Heart right ventricle (tissue), 16 donors: ENCODE measurements at regions of chr9 and their contacts with region 1.

Region 1: DNA sequence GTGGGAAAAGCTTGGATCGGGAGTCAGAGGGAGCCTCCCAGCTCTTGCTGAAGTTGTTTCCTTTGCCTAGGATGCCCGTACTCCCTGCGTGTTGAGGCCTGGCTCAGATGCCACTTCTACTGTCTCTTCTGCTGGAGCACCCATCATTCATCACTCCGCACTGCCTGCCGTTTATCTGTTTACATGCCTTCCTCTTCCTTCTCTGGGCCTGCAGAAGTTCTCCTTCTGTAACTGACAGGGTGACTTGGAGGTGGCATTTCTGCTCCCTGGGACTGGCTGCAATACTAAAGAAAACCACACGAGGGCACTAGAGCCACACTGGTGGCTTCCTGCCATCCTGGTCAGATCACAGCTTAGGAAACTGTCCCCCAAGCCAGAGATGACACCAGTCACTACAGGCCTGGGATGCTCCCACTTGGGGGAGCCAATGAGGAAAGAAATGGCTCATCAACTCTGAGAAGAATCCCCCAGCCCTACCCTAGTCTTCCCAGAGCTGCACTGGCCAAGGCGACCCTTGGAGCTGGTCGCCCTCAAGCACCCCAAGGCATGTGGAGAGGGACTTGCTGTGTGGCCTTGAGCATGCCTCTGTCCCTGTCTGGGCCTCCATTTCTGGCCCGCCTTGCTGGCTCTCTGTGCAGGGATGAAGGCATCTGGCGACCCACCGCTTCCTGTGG is 9.7 kb upstream of the SLC25A51 start:
- DNase-seq: peak; percentile 75 to 81
- ATAC-seq: peak; percentile 70 to 84 (median 82)
- H3K4me3 ChIP-seq: no peak overlapping the region
- H3K27ac ChIP-seq: peak overlapping the region in 1 of 10 donors; percentile 15
- H3K4me1 ChIP-seq: peaks cover 4 to 51% (median 38%) of the 10 kb centered on the region in 9 donors
- H3K27me3 ChIP-seq: no peaks in the 10 kb centered on the region
- CTCF ChIP-seq: peak; percentile 97 to 100 (median 98)

Region 2: GRCh38 chr9:37984672-37985611 is 71.3 kb after region 1 on chr9:
- intact Hi-C with region 1: loop called in 2 of 10 experiments (anchors 5 kb)
- DNase-seq: peak; percentile 43 to 67
- ATAC-seq: peak; percentile 74 to 88 (median 82)
- H3K4me3 ChIP-seq: no peak overlapping the region
- H3K27ac ChIP-seq: peak overlapping the region in 5 of 10 donors; percentile 18 to 77 (median 59)
- H3K4me1 ChIP-seq: peaks cover 18 to 72% (median 54%) of the 10 kb centered on the region in 9 donors
- H3K27me3 ChIP-seq: no peaks in the 10 kb centered on the region
- CTCF ChIP-seq: peak in 4 of 9 donors; percentile 9 to 37 (median 26)

Region 3: GRCh38 chr9:38010918-38011704 is 97.5 kb after region 1 on chr9:
- intact Hi-C with region 1: loop called in 6 of 10 experiments (anchors 5 to 10 kb)
- DNase-seq: no peak
- ATAC-seq: no peak
- H3K4me3 ChIP-seq: no peak overlapping the region
- H3K27ac ChIP-seq: no peak overlapping the region
- H3K4me1 ChIP-seq: peaks cover 19 to 56% (median 39%) of the 10 kb centered on the region in 9 donors
- H3K27me3 ChIP-seq: no peaks in the 10 kb centered on the region
- CTCF ChIP-seq: no peak

Region 4: GRCh38 chr9:38032266-38033110 is 118.9 kb after region 1 on chr9:
- intact Hi-C with region 1: loop called in 1 of 10 experiments (anchors 5 kb)
- DNase-seq: no peak
- ATAC-seq: peak in 7 of 8 donors; percentile 7 to 52 (median 36)
- H3K4me3 ChIP-seq: no peak overlapping the region
- H3K27ac ChIP-seq: peak overlapping the region in 7 of 10 donors; percentile 2 to 34 (median 22)
- H3K4me1 ChIP-seq: peaks cover under 1 to 65% (median 39%) of the 10 kb centered on the region in 9 donors
- H3K27me3 ChIP-seq: no peaks in the 10 kb centered on the region
- CTCF ChIP-seq: peak in 1 of 9 donors; percentile 12

Region 5: DNA sequence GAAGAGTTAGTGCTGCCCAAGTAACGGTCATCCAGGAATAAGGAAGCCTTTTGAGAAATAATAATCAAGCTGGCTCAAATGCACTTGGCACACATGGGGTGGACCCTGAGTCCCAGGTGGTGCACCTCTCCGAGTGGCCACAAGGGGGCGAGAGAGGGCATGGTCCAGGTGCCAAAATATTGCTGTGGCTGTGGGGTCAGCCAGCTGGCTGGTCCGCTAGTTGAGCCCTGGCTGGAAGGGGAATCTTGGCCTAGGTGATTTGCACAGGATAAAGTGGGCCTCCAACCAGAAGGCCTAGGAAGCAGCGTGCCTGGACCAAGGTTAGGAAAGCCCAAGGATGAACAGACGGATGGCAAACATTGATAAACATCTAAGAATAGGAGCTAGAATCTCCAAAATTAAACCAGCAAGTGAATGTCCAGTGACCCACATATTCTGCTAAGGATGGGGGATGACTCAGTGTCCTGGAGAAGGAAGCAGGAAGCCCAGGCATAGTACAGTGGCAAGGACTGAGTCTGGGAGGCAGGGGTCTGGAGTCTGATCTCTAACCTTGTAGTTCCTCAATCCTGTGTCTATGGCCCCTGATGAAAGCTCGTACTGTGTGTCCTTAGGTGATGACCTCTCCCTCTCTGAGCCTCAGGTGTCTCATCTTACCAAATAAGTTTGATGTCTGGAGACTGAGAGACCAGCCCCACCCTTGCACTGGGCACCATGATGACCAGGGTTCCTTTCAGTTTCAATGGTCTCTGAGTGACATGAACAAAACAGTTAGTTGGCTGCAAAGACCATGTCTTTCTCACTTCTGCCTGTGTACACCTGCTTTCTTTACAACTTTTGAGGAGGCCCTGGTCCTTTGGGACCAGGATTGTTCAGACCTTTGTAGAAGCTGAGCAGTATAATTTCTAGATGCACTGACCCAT is 174.6 kb after region 1 on chr9:
- intact Hi-C with region 1: loop called in 6 of 10 experiments (anchors 1 to 5 kb)
- DNase-seq: peak; percentile 79 to 83
- ATAC-seq: peak; percentile 62 to 89 (median 85)
- H3K4me3 ChIP-seq: no peak overlapping the region
- H3K27ac ChIP-seq: no peak overlapping the region
- H3K4me1 ChIP-seq: peaks cover 0 to 27% (median 4%) of the 10 kb centered on the region in 9 donors
- H3K27me3 ChIP-seq: no peaks in the 10 kb centered on the region
- CTCF ChIP-seq: peak; percentile 93 to 99 (median 97)

Region 6: DNA sequence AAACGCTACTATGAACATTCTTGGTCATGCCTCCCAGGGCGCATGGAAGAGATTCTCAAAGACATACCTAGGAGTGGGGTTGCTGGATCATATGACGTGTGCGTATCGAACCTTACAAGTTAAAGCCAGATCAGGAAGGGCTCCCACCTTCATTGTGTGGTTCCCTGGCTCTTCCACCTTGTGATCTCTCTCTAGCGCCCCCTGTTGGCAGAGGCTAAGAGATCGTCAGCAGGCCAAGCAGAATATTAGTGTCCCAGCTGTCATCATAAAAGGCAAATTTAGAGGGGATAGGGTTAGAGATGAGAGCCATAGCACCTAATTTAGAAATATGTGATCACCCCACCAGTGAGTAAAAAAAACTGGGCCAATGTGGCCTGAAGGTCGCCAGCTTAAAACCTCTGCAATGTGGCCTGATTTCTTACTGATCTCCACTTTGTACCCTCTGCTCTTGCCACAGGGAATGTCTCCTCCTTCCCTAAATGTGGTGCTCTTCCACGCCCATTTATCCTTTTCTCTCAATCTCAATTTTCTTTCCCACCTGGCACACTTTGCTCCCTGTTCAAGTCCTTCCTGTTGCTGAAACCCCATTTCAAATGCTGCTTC is 247.1 kb after region 1 on chr9:
- intact Hi-C with region 1: loop called (anchors 2 to 5 kb)
- DNase-seq: peak; percentile 48 to 62
- ATAC-seq: peak in 6 of 8 donors; percentile 42 to 70 (median 62)
- H3K4me3 ChIP-seq: no peak overlapping the region
- H3K27ac ChIP-seq: no peak overlapping the region
- H3K4me1 ChIP-seq: no peaks in the 10 kb centered on the region
- H3K27me3 ChIP-seq: no peaks in the 10 kb centered on the region
- CTCF ChIP-seq: peak; percentile 78 to 88 (median 84)

Region 7: GRCh38 chr9:38392235-38393127 is 478.9 kb after region 1 on chr9 and contains the start of gene ALDH1B1:
- intact Hi-C with region 1: loop called in 3 of 10 experiments (anchors 10 kb)
- DNase-seq: peak; percentile 80 to 87
- ATAC-seq: peak; percentile 98 to 99 (median 99)
- H3K4me3 ChIP-seq: peak within 1 kb of the TSS; percentile 54 to 89 (median 76)
- H3K27ac ChIP-seq: peak within 1 kb of the TSS in 8 of 10 donors; percentile 11 to 79 (median 54)
- H3K4me1 ChIP-seq: peaks cover 0 to 28% (median 15%) of the 10 kb centered on the region in 9 donors
- H3K27me3 ChIP-seq: peaks cover 0 to 3% (median 0%) of the 10 kb centered on the region in 7 donors
- CTCF ChIP-seq: peak in 5 of 9 donors; percentile 8 to 27 (median 22)
- total RNA-seq, gene ALDH1B1: 12.1 to 30.2 (median 18.9) TPM